ENCODE measurements at regions of chr19 and their contacts with region 1.

Region 1: GRCh38 chr19:10353793-10354391 is 14.5 kb upstream of the ICAM3 start:
- DNase-seq: peak in 21 of 35 experiments; percentile 8 to 48 (median 25)
- ATAC-seq: peak in 3 of 4 experiments; percentile 53 to 60 (median 55)
- H3K4me3 ChIP-seq: no peak overlapping the region
- H3K4me3 Mint-ChIP-seq: no peak overlapping the region
- H3K27ac ChIP-seq: no peak overlapping the region
- H3K27ac Mint-ChIP-seq: no peak overlapping the region
- H3K4me1 ChIP-seq: no peaks in the 10 kb centered on the region
- H3K4me1 Mint-ChIP-seq: no peaks in the 10 kb centered on the region
- H3K27me3 ChIP-seq: no peaks in the 10 kb centered on the region
- H3K27me3 Mint-ChIP-seq: no peaks in the 10 kb centered on the region

Region 2: GRCh38 chr19:10068205-10068604 is 285.7 kb before region 1 on chr19:
- CTCF ChIA-PET with region 1: interaction called in 1 of 2 experiments, 10 read pairs
- POLR2A ChIA-PET with region 1: no interaction called
- DNase-seq: no peak
- ATAC-seq: peak in 1 of 4 experiments; percentile 55
- H3K4me3 ChIP-seq: no peak overlapping the region
- H3K4me3 Mint-ChIP-seq: no peak overlapping the region
- H3K27ac ChIP-seq: no peak overlapping the region
- H3K27ac Mint-ChIP-seq: peak overlapping the region in 1 of 2 donors; percentile 41
- H3K4me1 ChIP-seq: peaks cover 0 to 7% of the 10 kb centered on the region in 2 experiments
- H3K4me1 Mint-ChIP-seq: peaks cover 0 to 12% (median 7%) of the 10 kb centered on the region in 3 donors
- H3K27me3 ChIP-seq: peaks cover 0 to 23% of the 10 kb centered on the region in 2 experiments
- H3K27me3 Mint-ChIP-seq: peaks cover 8 to 13% of the 10 kb centered on the region in 2 donors

Measured in T-cell (primary cell).